H1 (cell line): ENCODE measurements at regions of chr5 and their contacts with region 1.

Region 1: GRCh38 chr5:141155540-141156374 is 5.9 kb downstream of the PCDHB6 start:
- DNase-seq: peak in 1 of 2 experiments; percentile 67
- H3K4me3 ChIP-seq: no peak overlapping the region
- H3K27ac ChIP-seq: no peak overlapping the region
- H3K4me1 ChIP-seq: no peaks in the 10 kb centered on the region
- H3K27me3 ChIP-seq: no peaks in the 10 kb centered on the region
- CTCF ChIP-seq: peak in 2 of 3 experiments; percentile 70 to 72; a peak in 3 of 4 replicates
- EP300 ChIP-seq: no peak
- POLR2A ChIP-seq: no peak
- RAD21 ChIP-seq: peak; percentile 58 to 69

Region 2: DNA sequence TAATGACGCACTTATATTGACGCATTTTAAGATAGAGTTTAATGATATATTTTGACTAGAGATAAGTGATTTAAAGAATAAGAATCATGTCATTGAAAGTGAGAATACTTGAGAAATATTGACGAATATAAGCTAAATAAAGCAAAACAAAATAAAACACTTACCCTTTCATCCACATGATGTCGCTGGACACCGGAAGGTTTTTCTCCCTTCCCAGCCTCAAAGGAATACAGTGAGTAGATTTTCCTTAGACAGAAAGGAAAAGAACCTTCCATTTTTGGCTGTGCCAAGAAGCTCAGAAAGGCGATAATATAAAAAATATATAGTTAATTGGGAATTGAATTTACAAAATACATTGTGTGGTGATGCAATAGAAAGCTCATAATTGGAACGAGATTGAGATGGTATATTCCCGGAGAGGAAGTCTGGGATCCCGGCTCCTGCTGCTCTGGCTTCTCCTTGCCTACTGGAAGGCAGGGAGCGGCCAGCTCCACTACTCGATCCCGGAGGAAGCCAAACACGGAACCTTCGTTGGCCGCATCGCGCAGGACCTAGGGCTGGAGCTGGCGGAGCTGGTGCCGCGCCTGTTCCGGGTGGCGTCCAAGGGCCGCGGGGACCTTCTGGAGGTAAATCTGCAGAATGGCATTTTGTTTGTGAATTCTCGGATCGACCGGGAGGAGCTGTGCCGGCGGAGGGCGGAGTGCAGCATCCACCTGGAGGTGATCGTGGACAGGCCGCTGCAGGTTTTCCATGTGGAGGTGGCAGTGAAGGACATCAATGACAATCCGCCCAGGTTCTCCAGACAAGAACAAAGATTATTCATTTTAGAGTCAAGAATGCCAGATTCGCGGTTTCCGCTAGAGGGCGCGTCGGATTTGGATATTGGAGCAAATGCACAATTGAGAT is 334.1 kb before region 1 on chr5 and contains the start of gene PCDHA5:
- CTCF ChIA-PET with region 1: no interaction called
- POLR2A ChIA-PET with region 1: no interaction called
- DNase-seq: no peak
- H3K4me3 ChIP-seq: no peak within 1 kb of the TSS
- H3K27ac ChIP-seq: no peak within 1 kb of the TSS
- H3K4me1 ChIP-seq: no peaks in the 10 kb centered on the region
- H3K27me3 ChIP-seq: no peaks in the 10 kb centered on the region
- CTCF ChIP-seq: peak in 1 of 3 experiments; percentile 10; a peak in 1 of 4 replicates
- EP300 ChIP-seq: no peak
- POLR2A ChIP-seq: no peak
- RAD21 ChIP-seq: no peak
- total RNA-seq, gene PCDHA5: 0.52 and 0.76 TPM in 2 replicates

Region 3: DNA sequence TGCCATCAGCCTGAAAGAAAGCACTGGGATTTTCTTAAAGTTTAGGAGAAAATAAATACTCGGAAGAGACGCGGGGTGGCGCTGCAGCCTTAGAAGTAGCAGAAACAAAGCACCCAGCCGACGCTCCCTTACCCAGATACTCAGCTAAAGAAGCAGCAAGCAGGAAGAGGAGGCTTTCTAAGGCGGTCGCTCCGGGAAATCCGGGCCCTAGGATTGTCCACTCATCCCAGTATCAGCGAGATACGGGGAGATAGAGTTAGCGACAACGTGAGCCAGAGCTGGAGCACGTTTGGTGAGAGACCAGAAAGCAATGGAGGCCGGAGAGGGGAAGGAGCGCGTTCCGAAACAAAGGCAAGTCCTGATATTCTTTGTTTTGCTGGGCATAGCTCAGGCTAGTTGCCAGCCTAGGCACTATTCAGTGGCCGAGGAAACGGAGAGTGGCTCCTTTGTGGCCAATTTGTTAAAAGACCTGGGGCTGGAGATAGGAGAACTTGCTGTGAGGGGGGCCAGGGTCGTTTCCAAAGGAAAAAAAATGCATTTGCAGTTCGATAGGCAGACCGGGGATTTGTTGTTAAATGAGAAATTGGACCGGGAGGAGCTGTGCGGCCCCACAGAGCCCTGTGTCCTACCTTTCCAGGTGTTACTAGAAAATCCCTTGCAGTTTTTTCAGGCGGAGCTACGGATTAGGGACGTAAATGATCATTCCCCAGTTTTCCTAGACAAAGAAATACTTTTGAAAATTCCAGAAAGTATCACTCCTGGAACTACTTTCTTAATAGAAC is 61.1 kb before region 1 on chr5 and contains the start of gene PCDHB2:
- CTCF ChIA-PET with region 1: interaction called, 12 read pairs
- POLR2A ChIA-PET with region 1: interaction called, 5 read pairs
- DNase-seq: peak; percentile 75 to 84
- H3K4me3 ChIP-seq: peak within 1 kb of the TSS; percentile 80 to 99 (median 92)
- H3K27ac ChIP-seq: peak within 1 kb of the TSS; percentile 91
- H3K4me1 ChIP-seq: no peaks in the 10 kb centered on the region; a peak in 2 of 7 replicates
- H3K27me3 ChIP-seq: no peaks in the 10 kb centered on the region
- CTCF ChIP-seq: peak; percentile 56 to 85 (median 83)
- EP300 ChIP-seq: no peak
- POLR2A ChIP-seq: peak; percentile 77 to 96
- RAD21 ChIP-seq: peak; percentile 76 to 82
- total RNA-seq, gene PCDHB2: 25.6 and 28.8 TPM in 2 replicates

Region 4: DNA sequence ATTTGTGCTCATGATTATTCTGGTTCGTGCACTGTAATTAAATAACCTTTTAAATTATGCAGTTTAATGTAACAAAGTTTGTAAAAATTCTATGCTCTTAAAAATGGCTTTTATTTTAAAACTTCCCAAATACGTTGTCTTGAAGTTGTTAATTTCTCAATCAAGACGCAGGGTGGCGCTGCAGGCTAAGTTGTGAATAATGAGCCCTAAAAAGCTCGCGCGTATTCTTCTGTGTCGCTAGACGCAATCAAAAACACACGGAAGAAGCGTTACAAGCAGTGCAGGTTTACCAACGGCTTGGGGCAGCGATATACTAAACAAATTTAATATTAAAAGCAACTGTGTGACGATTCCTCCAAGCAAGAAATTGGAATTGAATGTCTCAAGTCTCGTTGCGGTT is 34.2 kb before region 1 on chr5 and contains the start of gene PCDHB4:
- CTCF ChIA-PET with region 1: interaction called, 16 read pairs
- POLR2A ChIA-PET with region 1: no interaction called
- DNase-seq: no peak
- H3K4me3 ChIP-seq: no peak within 1 kb of the TSS; a peak in 2 of 8 replicates
- H3K27ac ChIP-seq: no peak within 1 kb of the TSS
- H3K4me1 ChIP-seq: no peaks in the 10 kb centered on the region
- H3K27me3 ChIP-seq: no peaks in the 10 kb centered on the region
- CTCF ChIP-seq: peak; percentile 10 to 70 (median 63); a peak in 3 of 4 replicates
- EP300 ChIP-seq: no peak
- POLR2A ChIP-seq: no peak
- RAD21 ChIP-seq: peak; percentile 77 to 78
- total RNA-seq, gene PCDHB4: 1.4 and 1.5 TPM in 2 replicates

Region 5: GRCh38 chr5:141172378-141173204 is 16.8 kb after region 1 on chr5 and contains the start of gene PCDHB7:
- CTCF ChIA-PET with region 1: interaction called, 48 read pairs
- POLR2A ChIA-PET with region 1: no interaction called
- DNase-seq: no peak
- H3K4me3 ChIP-seq: no peak within 1 kb of the TSS
- H3K27ac ChIP-seq: no peak within 1 kb of the TSS
- H3K4me1 ChIP-seq: no peaks in the 10 kb centered on the region
- H3K27me3 ChIP-seq: no peaks in the 10 kb centered on the region
- CTCF ChIP-seq: peak in 2 of 3 experiments; percentile 60 to 70; a peak in 3 of 4 replicates
- EP300 ChIP-seq: no peak
- POLR2A ChIP-seq: no peak
- RAD21 ChIP-seq: peak; percentile 69 to 71
- total RNA-seq, gene PCDHB7: 0.19 and 0.25 TPM in 2 replicates

Region 6: GRCh38 chr5:141192110-141192732 is 36.5 kb after region 1 on chr5 and contains the start of gene PCDHB10:
- CTCF ChIA-PET with region 1: interaction called, 35 read pairs
- POLR2A ChIA-PET with region 1: no interaction called
- DNase-seq: peak in 1 of 2 experiments; percentile 92
- H3K4me3 ChIP-seq: peak within 1 kb of the TSS; percentile 14 to 46 (median 35); a peak in 6 of 8 replicates
- H3K27ac ChIP-seq: no peak within 1 kb of the TSS
- H3K4me1 ChIP-seq: no peaks in the 10 kb centered on the region; a peak in 1 of 7 replicates
- H3K27me3 ChIP-seq: no peaks in the 10 kb centered on the region
- CTCF ChIP-seq: peak; percentile 72 to 83 (median 83)
- EP300 ChIP-seq: no peak
- POLR2A ChIP-seq: no peak
- RAD21 ChIP-seq: peak; percentile 82 to 84
- total RNA-seq, gene PCDHB10: 1.8 and 1.9 TPM in 2 replicates

Region 7: GRCh38 chr5:141199359-141200235 is 43.8 kb after region 1 on chr5 and contains the start of gene PCDHB11:
- CTCF ChIA-PET with region 1: interaction called, 12 read pairs
- POLR2A ChIA-PET with region 1: no interaction called
- DNase-seq: no peak
- H3K4me3 ChIP-seq: peak within 1 kb of the TSS in 1 of 4 experiments; percentile 25; a peak in 2 of 8 replicates
- H3K27ac ChIP-seq: no peak within 1 kb of the TSS
- H3K4me1 ChIP-seq: no peaks in the 10 kb centered on the region
- H3K27me3 ChIP-seq: no peaks in the 10 kb centered on the region
- CTCF ChIP-seq: peak in 2 of 3 experiments; percentile 55 to 66; a peak in 3 of 4 replicates
- EP300 ChIP-seq: no peak
- POLR2A ChIP-seq: no peak
- RAD21 ChIP-seq: peak; percentile 68 to 73
- total RNA-seq, gene PCDHB11: 0.86 and 1.4 TPM in 2 replicates

Region 8: DNA sequence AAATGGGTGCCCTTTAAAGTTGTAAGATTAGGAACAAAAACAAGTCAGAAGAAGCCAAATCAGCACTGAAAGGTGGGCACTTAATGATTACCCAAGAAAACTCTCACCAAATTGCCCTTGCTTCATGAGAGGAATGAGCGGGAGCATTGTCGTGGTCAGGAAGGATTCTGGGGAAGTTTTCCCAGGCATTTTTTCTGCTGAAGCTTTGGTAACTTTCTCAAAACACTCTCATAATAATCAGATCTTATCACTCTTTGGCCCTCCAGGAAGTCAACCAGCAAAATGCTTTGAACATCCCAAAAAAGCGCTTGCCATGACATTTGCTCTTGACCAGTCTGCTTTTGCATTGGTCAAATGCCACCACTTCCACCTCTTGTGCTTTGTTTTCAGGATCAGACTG is 309.6 kb after region 1 on chr5:
- CTCF ChIA-PET with region 1: no interaction called
- POLR2A ChIA-PET with region 1: no interaction called
- DNase-seq: no peak
- H3K4me3 ChIP-seq: no peak overlapping the region
- H3K27ac ChIP-seq: no peak overlapping the region
- H3K4me1 ChIP-seq: no peaks in the 10 kb centered on the region
- H3K27me3 ChIP-seq: no peaks in the 10 kb centered on the region
- CTCF ChIP-seq: no peak
- EP300 ChIP-seq: no peak
- POLR2A ChIP-seq: no peak
- RAD21 ChIP-seq: no peak